ENCODE measurements at regions of chr18 and their contacts with region 1.

Region 1: DNA sequence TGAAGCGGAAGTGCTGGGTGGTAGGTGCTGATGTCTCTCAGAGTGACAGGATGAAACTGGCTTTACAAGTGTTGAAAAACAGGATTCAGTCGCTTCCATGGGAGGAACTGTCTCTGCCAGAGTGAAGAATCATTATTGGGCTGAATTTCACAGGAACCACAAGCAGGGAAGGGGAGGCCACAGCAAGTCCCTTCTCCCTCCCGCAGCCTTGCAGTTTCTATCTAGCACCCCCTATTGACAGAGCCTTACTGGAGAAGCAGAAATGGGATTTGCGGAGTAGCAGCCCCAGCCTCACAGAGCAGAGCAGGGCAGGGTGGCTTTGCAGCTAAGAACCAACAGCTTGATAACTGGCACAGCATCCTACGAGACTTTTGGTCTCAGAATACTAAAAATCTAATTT is 33.3 kb upstream of the RMP24 start:
- DNase-seq: no peak
- H3K4me3 ChIP-seq: no peak overlapping the region
- H3K27ac ChIP-seq: no peak overlapping the region
- H3K4me1 ChIP-seq: no peaks in the 10 kb centered on the region
- H3K27me3 ChIP-seq: no peaks in the 10 kb centered on the region
- CTCF ChIP-seq: no peak
- POLR2A ChIP-seq: no peak

Region 2: DNA sequence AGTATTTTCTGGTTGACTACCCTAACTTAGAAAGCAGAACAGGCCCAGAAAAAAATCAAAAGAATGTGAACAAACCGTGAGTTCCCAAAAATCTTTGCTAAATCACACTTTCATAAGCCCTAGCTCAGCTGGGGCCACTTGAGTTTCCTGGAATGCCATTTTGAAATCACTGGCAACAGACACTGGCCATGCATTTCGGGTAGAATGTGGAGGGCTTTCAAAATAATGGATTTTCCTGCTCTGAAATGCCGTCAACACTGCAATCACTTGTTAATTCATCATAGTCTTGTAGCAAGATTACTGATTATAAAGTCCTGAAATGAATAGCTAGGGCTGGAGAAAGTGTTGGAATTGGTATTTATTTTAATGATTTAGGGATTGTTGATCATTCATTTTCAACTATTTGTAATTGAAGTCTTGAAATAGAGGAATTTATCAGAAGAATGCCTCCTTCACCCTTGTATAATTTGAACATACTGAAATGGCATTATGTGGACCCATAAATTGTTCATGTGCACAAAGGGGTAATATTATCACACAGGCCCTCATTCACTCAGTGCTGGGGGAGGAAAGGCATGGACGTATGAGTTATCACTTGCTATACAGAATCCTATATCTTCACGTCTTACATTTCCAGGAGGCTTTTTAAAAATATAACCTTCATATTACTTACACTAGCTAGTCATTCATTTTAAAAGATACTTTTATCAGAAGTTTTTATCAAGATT is 1094.2 kb before region 1 on chr18:
- intact Hi-C with region 1: no loop called
- DNase-seq: no peak
- H3K4me3 ChIP-seq: no peak overlapping the region
- H3K27ac ChIP-seq: no peak overlapping the region
- H3K4me1 ChIP-seq: no peaks in the 10 kb centered on the region
- H3K27me3 ChIP-seq: no peaks in the 10 kb centered on the region
- CTCF ChIP-seq: no peak
- POLR2A ChIP-seq: no peak

Region 3: GRCh38 chr18:35407871-35408481 is 531.2 kb before region 1 on chr18:
- intact Hi-C with region 1: loop called (anchors 5 kb)
- DNase-seq: no peak
- H3K4me3 ChIP-seq: no peak overlapping the region
- H3K27ac ChIP-seq: no peak overlapping the region
- H3K4me1 ChIP-seq: peaks cover 0 to 48% (median 20%) of the 10 kb centered on the region in 6 donors
- H3K27me3 ChIP-seq: no peaks in the 10 kb centered on the region
- CTCF ChIP-seq: peak; percentile 53 to 82 (median 74)
- POLR2A ChIP-seq: no peak

Region 4: GRCh38 chr18:36931106-36931505 is 992.0 kb after region 1 on chr18:
- intact Hi-C with region 1: no loop called
- DNase-seq: no peak
- H3K4me3 ChIP-seq: no peak overlapping the region
- H3K27ac ChIP-seq: no peak overlapping the region
- H3K4me1 ChIP-seq: no peaks in the 10 kb centered on the region
- H3K27me3 ChIP-seq: no peaks in the 10 kb centered on the region
- CTCF ChIP-seq: no peak
- POLR2A ChIP-seq: no peak

Measured in spleen (tissue), 13 donors.